Adrenal gland (tissue), 19 donors: ENCODE measurements at regions of chr2 and their contacts with region 1.

Region 1: GRCh38 chr2:96138179-96139145 is at the start of gene ASTL:
- DNase-seq: peak in 6 of 7 donors; percentile 44 to 66 (median 53)
- H3K4me3 ChIP-seq: no peak within 1 kb of the TSS
- H3K27ac ChIP-seq: no peak within 1 kb of the TSS
- H3K4me1 ChIP-seq: no peaks in the 10 kb centered on the region
- H3K27me3 ChIP-seq: no peaks in the 10 kb centered on the region
- CTCF ChIP-seq: peak; percentile 28 to 69 (median 54)
- POLR2A ChIP-seq: no peak
- total RNA-seq, gene ASTL: not detected

Region 2: DNA sequence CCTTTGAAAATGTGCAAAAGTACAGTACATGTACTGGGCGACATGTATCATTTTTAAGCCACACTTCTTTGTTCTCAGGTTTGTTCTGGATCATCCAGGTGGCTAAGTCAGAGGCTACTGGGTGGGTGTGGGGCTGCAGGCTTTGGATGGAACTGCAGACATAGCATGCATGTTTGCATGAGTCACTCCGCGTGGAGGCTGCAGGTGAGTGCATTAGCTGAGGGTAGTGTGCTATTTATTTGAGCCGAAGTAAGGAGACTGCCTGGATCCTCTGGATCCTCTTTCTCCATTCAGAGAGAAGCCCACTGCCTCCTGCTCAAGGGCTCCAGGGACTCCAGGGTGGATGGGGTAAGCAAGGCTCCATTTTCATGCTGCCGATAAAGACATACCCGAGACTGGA is 376.1 kb after region 1 on chr2:
- intact Hi-C with region 1: loop called in 1 of 2 experiments (anchors 10 kb)
- DNase-seq: peak in 1 of 7 donors; percentile 5
- H3K4me3 ChIP-seq: no peak overlapping the region
- H3K27ac ChIP-seq: no peak overlapping the region
- H3K4me1 ChIP-seq: no peaks in the 10 kb centered on the region
- H3K27me3 ChIP-seq: peaks cover 4% of the 10 kb centered on the region
- CTCF ChIP-seq: no peak
- POLR2A ChIP-seq: no peak